Aorta (tissue), 5 donors: ENCODE measurements at regions of chr7 and their contacts with region 1.

Region 1: GRCh38 chr7:112414855-112415490 is 35.3 kb upstream of the IFRD1 start:
- DNase-seq: no peak
- ATAC-seq: no peak
- H3K4me3 ChIP-seq: no peak overlapping the region
- H3K27ac ChIP-seq: no peak overlapping the region
- H3K4me1 ChIP-seq: no peaks in the 10 kb centered on the region
- H3K27me3 ChIP-seq: no peaks in the 10 kb centered on the region

Region 2: DNA sequence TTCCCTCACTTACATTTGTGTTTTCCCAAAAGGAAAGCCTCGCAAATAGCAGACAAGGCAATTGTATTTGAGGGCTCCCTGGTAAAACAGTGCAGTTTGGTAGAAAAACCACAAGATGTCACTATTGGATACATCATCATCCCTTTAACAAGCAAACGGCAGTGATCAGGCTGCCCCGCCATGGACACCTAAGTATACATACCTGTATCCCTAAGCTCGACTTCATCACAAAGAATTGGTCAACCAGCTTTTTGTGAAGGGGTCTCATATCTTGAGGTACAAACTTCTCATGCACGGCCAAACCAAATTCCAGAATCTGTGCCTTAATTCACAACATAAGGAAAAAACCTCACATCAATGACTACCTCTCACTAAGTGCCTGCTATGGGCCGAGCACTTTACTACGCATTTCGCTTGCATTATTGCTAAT is 673.1 kb before region 1 on chr7:
- intact Hi-C with region 1: loop called in 1 of 2 experiments (anchors 10 kb)
- DNase-seq: no peak
- ATAC-seq: peak; percentile 72
- H3K4me3 ChIP-seq: no peak overlapping the region
- H3K27ac ChIP-seq: no peak overlapping the region
- H3K4me1 ChIP-seq: no peaks in the 10 kb centered on the region
- H3K27me3 ChIP-seq: no peaks in the 10 kb centered on the region

Region 3: GRCh38 chr7:111763221-111763801 is 651.7 kb before region 1 on chr7:
- intact Hi-C with region 1: loop called in 1 of 2 experiments (anchors 10 kb)
- DNase-seq: no peak
- ATAC-seq: peak; percentile 72
- H3K4me3 ChIP-seq: no peak overlapping the region
- H3K27ac ChIP-seq: no peak overlapping the region
- H3K4me1 ChIP-seq: no peaks in the 10 kb centered on the region
- H3K27me3 ChIP-seq: no peaks in the 10 kb centered on the region

Region 4: DNA sequence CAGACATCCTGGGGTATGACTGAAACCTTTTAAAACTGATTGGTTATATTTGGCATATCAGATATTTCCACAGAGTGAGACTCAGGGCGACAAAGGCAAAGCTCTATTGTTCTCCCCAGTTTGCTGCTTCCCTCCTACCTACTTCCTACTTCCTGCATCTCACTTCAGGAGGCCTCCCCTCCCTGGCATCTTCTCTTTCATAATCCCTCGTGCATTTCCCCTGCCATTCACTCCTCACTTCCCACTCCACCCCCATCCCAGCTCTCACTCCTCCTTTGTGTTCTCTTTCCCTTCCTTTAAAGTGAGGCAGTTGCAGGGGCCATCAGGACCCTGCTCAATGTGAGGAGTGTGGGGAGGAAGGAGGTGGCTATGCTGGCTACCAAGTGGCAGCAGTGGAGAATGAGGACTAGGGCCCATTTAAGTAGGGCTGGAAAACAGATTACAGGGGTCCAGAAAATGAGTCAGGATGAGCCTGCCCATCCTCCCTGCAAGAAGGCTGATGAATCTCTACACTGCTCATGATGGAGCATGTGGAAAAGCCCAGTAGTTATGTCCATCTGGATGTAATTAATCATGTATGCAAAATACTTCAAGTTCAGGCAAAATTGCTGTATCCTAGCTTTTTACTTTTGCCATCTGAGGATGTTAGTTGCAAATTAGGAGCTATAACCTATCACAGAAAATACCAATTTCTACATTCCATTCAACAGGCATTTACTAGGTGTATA is 540.8 kb before region 1 on chr7:
- intact Hi-C with region 1: loop called in 1 of 2 experiments (anchors 10 kb)
- DNase-seq: no peak
- ATAC-seq: no peak
- H3K4me3 ChIP-seq: no peak overlapping the region
- H3K27ac ChIP-seq: peak overlapping the region; percentile 47 to 92
- H3K4me1 ChIP-seq: peaks cover 0 to 4% of the 10 kb centered on the region in 2 donors
- H3K27me3 ChIP-seq: no peaks in the 10 kb centered on the region

Region 5: DNA sequence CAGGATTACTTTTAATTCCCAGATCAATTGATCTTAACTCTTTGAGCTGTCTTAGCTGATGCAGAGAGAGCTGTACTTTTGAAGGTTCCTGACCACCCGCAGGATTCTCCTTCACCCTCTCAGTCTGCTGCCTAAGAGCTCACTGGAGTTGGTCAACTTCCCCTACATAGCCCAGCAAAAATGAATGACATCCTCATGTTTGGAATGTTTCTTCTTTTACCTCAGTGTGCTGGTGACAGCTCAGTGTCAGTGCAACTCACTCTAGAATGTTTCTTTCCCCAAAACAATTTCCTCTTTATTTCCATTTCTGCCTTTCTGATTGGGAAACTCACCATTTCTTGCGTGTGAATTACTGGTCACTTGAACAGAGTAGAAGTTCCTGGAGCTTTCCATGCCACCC is 114.5 kb after region 1 on chr7:
- intact Hi-C with region 1: no loop called
- DNase-seq: no peak
- ATAC-seq: no peak
- H3K4me3 ChIP-seq: no peak overlapping the region
- H3K27ac ChIP-seq: no peak overlapping the region
- H3K4me1 ChIP-seq: no peaks in the 10 kb centered on the region
- H3K27me3 ChIP-seq: peaks cover 0 to 2% of the 10 kb centered on the region in 2 donors